Activated T-helper 2 cell treated with anti-CD3 and anti-CD28 coated beads, Interferon-gamma antibody, Interleukin-2, Interleukin-4, amounts not matched to agents 10 μg/mL and 5 μg/mL and 100 μg/mL, durations not matched to agents 14 hours and 24 hours and 36 hours (primary cell): ENCODE measurements at regions of chr14 and their contacts with region 1.

Region 1: DNA sequence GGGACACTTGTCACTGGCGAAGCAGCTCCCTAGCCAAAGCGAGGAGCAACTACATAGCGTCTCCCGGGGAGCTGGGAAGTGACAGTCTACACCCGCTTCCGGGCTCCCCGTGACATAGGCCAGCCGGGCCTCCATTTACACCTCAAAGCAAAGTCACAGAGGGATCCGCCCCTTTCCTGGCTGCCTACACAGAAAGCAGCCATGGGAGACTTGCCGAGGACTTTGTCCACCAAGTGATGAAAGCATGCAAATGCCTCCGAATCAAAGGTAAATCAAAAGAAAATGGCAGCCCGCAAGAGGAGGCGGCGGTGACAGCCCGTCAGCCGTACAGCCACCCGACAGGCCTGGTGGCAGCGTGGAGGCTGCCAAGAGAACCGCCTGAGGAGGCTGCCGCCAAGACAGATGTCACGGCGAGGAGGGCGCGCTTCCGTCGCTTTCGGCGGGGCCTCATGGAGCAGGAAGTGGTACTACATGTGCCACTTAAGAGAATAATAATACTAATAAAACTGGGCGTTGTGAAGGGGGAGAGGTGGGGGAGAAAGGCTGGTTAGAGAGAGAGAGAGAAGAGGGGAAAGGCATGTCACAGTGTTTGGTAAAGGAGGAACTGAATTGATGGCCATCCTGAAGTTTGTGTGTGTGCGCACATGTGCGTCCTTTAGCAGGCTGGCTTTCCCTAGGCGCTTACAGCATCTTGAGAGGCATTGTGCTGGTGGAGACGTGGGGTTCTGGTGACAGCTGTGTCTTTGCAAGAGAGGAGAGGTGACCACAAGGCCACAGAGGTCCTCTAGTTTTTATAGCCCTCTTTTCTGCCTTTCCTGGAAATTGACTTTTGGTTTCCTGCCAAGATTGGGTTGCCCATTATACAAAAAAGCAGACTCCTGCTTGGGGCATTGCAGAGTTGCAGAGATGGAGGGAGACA is 661.7 kb downstream of the VRK1 start:
- DNase-seq: peak; percentile 81
- H3K4me3 Mint-ChIP-seq: peak overlapping the region; percentile 84
- H3K27ac Mint-ChIP-seq: peak overlapping the region; percentile 97
- H3K4me1 Mint-ChIP-seq: peaks cover 59% of the 10 kb centered on the region
- H3K27me3 Mint-ChIP-seq: no peaks in the 10 kb centered on the region

Region 2: GRCh38 chr14:97306760-97307246 is 152.1 kb before region 1 on chr14:
- intact Hi-C with region 1: loop called (anchors 2 kb)
- DNase-seq: no peak
- H3K4me3 Mint-ChIP-seq: no peak overlapping the region
- H3K27ac Mint-ChIP-seq: peak overlapping the region; percentile 84
- H3K4me1 Mint-ChIP-seq: peaks cover 53% of the 10 kb centered on the region
- H3K27me3 Mint-ChIP-seq: no peaks in the 10 kb centered on the region

Region 3: GRCh38 chr14:97442363-97442762 is 16.6 kb before region 1 on chr14:
- intact Hi-C with region 1: loop called (anchors 1 kb)
- DNase-seq: peak; percentile 70
- H3K4me3 Mint-ChIP-seq: peak overlapping the region; percentile 65
- H3K27ac Mint-ChIP-seq: peak overlapping the region; percentile 98
- H3K4me1 Mint-ChIP-seq: peaks cover 79% of the 10 kb centered on the region
- H3K27me3 Mint-ChIP-seq: no peaks in the 10 kb centered on the region

Region 4: GRCh38 chr14:97634751-97635150 is 175.8 kb after region 1 on chr14:
- intact Hi-C with region 1: loop called (anchors 5 kb)
- DNase-seq: no peak
- H3K4me3 Mint-ChIP-seq: peak overlapping the region; percentile 74
- H3K27ac Mint-ChIP-seq: peak overlapping the region; percentile 53
- H3K4me1 Mint-ChIP-seq: peaks cover 41% of the 10 kb centered on the region
- H3K27me3 Mint-ChIP-seq: no peaks in the 10 kb centered on the region

Region 5: GRCh38 chr14:97978341-97978740 is 519.4 kb after region 1 on chr14:
- intact Hi-C with region 1: loop called (anchors 2 kb)
- DNase-seq: peak; percentile 68
- H3K4me3 Mint-ChIP-seq: peak overlapping the region; percentile 91
- H3K27ac Mint-ChIP-seq: peak overlapping the region; percentile 95
- H3K4me1 Mint-ChIP-seq: peaks cover 51% of the 10 kb centered on the region
- H3K27me3 Mint-ChIP-seq: no peaks in the 10 kb centered on the region

Region 6: GRCh38 chr14:99266181-99267178 is 1807.6 kb after region 1 on chr14:
- intact Hi-C with region 1: loop called (anchors 5 kb)
- DNase-seq: peak; percentile 83
- H3K4me3 Mint-ChIP-seq: peak overlapping the region; percentile 85
- H3K27ac Mint-ChIP-seq: peak overlapping the region; percentile 100
- H3K4me1 Mint-ChIP-seq: peaks cover 65% of the 10 kb centered on the region
- H3K27me3 Mint-ChIP-seq: no peaks in the 10 kb centered on the region